ENCODE measurements at regions of chr10 and their contacts with region 1.

Region 1: GRCh38 chr10:110610308-110610774 is 33.8 kb upstream of the RBM20 start:
- DNase-seq: peak; percentile 24
- ATAC-seq: peak; percentile 10; the same call in 2 of the 3 replicates
- H3K4me3 ChIP-seq: no peak overlapping the region
- H3K27ac ChIP-seq: no peak overlapping the region
- H3K4me1 ChIP-seq: peaks cover 31% of the 10 kb centered on the region
- H3K27me3 ChIP-seq: no peaks in the 10 kb centered on the region
- CTCF ChIP-seq: peak; percentile 85 to 92 (median 88)
- EP300 ChIP-seq: no peak
- POLR2A ChIP-seq: no peak
- RAD21 ChIP-seq: peak; percentile 98

Region 2: DNA sequence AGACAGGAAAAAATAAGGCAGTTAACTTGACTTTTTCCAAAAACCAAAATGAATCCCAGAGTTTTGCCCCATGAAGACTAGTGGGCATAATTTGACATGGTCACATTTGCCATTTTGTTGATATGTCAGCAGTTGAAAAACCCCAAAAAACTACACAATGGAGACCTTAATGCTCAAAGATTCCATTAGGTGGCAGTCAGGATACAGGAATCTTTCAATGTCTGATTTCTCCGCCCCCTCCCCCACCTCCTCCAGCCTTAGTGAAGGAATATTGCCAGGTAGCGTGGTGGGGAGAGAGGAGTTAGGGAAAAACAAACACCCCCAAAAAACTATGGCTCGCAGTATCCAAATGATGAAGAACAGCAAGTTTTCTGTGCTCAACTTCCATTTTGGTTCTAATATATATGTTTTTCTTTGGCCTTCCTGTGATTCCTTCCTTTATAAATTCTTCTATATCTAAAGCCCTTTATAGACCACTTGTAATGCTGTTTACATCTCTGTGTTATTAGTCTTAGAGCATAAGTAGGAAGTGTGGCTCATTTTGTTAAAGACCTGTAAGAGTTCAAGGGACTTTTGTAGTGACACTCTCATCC is 298.9 kb before region 1 on chr10:
- CTCF ChIA-PET with region 1: interaction called, 15 read pairs
- POLR2A ChIA-PET with region 1: no interaction called
- RAD21 ChIA-PET with region 1: interaction called, 12 read pairs
- SMC1A ChIA-PET with region 1: interaction called, 10 read pairs
- in situ Hi-C with region 1: no loop called
- intact Hi-C with region 1: no loop called
- DNase-seq: peak; percentile 47
- ATAC-seq: peak; percentile 83
- H3K4me3 ChIP-seq: no peak overlapping the region
- H3K27ac ChIP-seq: no peak overlapping the region
- H3K4me1 ChIP-seq: 0 out of 2 replicates have a peak, but pooled peaks cover 2% of the 10 kb centered on the region
- H3K27me3 ChIP-seq: no peaks in the 10 kb centered on the region
- CTCF ChIP-seq: peak; percentile 62 to 76 (median 68); a peak in 5 of 6 replicates
- EP300 ChIP-seq: no peak
- POLR2A ChIP-seq: no peak
- RAD21 ChIP-seq: peak; percentile 96

Region 3: DNA sequence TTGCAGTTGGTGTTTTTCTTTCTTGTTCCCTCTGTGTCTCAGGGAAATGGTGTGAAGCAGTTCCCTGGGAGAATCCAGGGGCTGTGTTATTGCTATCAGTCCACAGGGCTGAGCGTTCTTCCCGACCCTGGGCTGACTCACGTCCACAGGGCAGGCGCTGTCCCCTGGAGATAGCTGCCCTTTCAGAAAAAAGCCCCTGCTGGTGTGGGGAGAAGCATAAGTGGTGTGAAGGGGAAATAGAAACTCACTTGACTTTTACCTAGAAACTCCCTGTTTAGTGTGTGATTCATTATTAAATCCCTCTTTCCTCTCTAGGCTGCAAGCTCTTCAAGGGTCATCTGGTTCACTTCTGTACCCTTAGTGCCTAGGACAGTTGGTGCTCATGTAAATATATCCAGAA is 242.3 kb before region 1 on chr10:
- CTCF ChIA-PET with region 1: no interaction called
- POLR2A ChIA-PET with region 1: no interaction called
- RAD21 ChIA-PET with region 1: no interaction called
- SMC1A ChIA-PET with region 1: no interaction called
- in situ Hi-C with region 1: no loop called
- intact Hi-C with region 1: no loop called
- DNase-seq: no peak
- ATAC-seq: peak; percentile 86
- H3K4me3 ChIP-seq: no peak overlapping the region
- H3K27ac ChIP-seq: no peak overlapping the region; the same call in 1 of the 2 replicates
- H3K4me1 ChIP-seq: peaks cover 29% of the 10 kb centered on the region
- H3K27me3 ChIP-seq: no peaks in the 10 kb centered on the region
- CTCF ChIP-seq: no peak
- EP300 ChIP-seq: peak in 1 of 2 experiments; percentile 43; a peak in 1 of 4 replicates
- POLR2A ChIP-seq: no peak
- RAD21 ChIP-seq: no peak

Region 4: GRCh38 chr10:110414563-110415309 is 195.6 kb before region 1 on chr10:
- CTCF ChIA-PET with region 1: no interaction called
- POLR2A ChIA-PET with region 1: no interaction called
- RAD21 ChIA-PET with region 1: no interaction called
- SMC1A ChIA-PET with region 1: no interaction called
- in situ Hi-C with region 1: no loop called
- intact Hi-C with region 1: no loop called
- DNase-seq: peak; percentile 99
- ATAC-seq: peak; percentile 83
- H3K4me3 ChIP-seq: no peak overlapping the region
- H3K27ac ChIP-seq: peak overlapping the region; percentile 93
- H3K4me1 ChIP-seq: peaks cover 69% of the 10 kb centered on the region
- H3K27me3 ChIP-seq: no peaks in the 10 kb centered on the region
- CTCF ChIP-seq: no peak
- EP300 ChIP-seq: peak; percentile 97 to 99
- POLR2A ChIP-seq: peak; percentile 49; the same call in 1 of the 2 replicates
- RAD21 ChIP-seq: peak; percentile 38

Region 5: DNA sequence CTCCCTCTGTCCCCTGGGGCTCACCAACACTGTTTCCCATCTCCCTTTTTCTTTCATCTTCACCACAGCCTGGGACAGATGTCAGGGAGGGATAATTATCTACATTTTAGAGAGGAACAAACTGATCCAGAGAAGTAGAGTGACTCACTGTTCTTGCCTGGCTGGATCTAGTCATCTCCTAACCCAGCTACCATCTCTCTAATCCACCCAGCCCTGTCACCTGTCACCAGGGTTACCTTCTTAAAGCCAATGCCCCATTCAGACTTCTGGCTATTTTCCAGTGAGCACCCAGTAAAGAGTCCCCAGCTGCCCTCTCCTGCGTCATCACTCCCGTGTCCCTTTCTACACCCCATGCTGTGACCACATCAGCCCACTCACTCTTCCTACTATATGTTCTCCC is 181.1 kb before region 1 on chr10:
- CTCF ChIA-PET with region 1: no interaction called
- POLR2A ChIA-PET with region 1: no interaction called
- RAD21 ChIA-PET with region 1: no interaction called
- SMC1A ChIA-PET with region 1: no interaction called
- in situ Hi-C with region 1: no loop called
- intact Hi-C with region 1: no loop called
- DNase-seq: no peak
- ATAC-seq: peak; percentile 9
- H3K4me3 ChIP-seq: no peak overlapping the region
- H3K27ac ChIP-seq: no peak overlapping the region
- H3K4me1 ChIP-seq: peaks cover 30% of the 10 kb centered on the region
- H3K27me3 ChIP-seq: no peaks in the 10 kb centered on the region
- CTCF ChIP-seq: no peak
- EP300 ChIP-seq: no peak
- POLR2A ChIP-seq: no peak
- RAD21 ChIP-seq: no peak

Region 6: GRCh38 chr10:110651044-110651958 is 41.0 kb after region 1 on chr10:
- CTCF ChIA-PET with region 1: interaction called, 14 read pairs
- POLR2A ChIA-PET with region 1: interaction called, 3 read pairs
- RAD21 ChIA-PET with region 1: interaction called, 5 read pairs
- SMC1A ChIA-PET with region 1: interaction called, 16 read pairs
- in situ Hi-C with region 1: no loop called
- intact Hi-C with region 1: no loop called
- DNase-seq: no peak
- ATAC-seq: peak; percentile 92
- H3K4me3 ChIP-seq: no peak overlapping the region
- H3K27ac ChIP-seq: no peak overlapping the region
- H3K4me1 ChIP-seq: peaks cover 11% of the 10 kb centered on the region
- H3K27me3 ChIP-seq: no peaks in the 10 kb centered on the region
- CTCF ChIP-seq: no peak
- EP300 ChIP-seq: no peak
- POLR2A ChIP-seq: no peak
- RAD21 ChIP-seq: no peak

Region 7: GRCh38 chr10:110681023-110681681 is 70.8 kb after region 1 on chr10:
- CTCF ChIA-PET with region 1: interaction called, 141 read pairs
- POLR2A ChIA-PET with region 1: interaction called, 4 read pairs
- RAD21 ChIA-PET with region 1: interaction called, 13 read pairs
- SMC1A ChIA-PET with region 1: interaction called, 98 read pairs
- in situ Hi-C with region 1: no loop called
- intact Hi-C with region 1: loop called (anchors 1 kb)
- DNase-seq: no peak
- ATAC-seq: peak; percentile 89
- H3K4me3 ChIP-seq: no peak overlapping the region
- H3K27ac ChIP-seq: no peak overlapping the region
- H3K4me1 ChIP-seq: no peaks in the 10 kb centered on the region
- H3K27me3 ChIP-seq: no peaks in the 10 kb centered on the region
- CTCF ChIP-seq: peak; percentile 49 to 64 (median 55)
- EP300 ChIP-seq: no peak
- POLR2A ChIP-seq: no peak
- RAD21 ChIP-seq: peak; percentile 27; the same call in 1 of the 2 replicates

Region 8: GRCh38 chr10:111018021-111018420 is 407.7 kb after region 1 on chr10:
- CTCF ChIA-PET with region 1: no interaction called
- POLR2A ChIA-PET with region 1: no interaction called
- RAD21 ChIA-PET with region 1: no interaction called
- SMC1A ChIA-PET with region 1: no interaction called
- in situ Hi-C with region 1: no loop called
- intact Hi-C with region 1: loop called (anchors 10 kb)
- DNase-seq: no peak
- ATAC-seq: no peak
- H3K4me3 ChIP-seq: no peak overlapping the region
- H3K27ac ChIP-seq: no peak overlapping the region
- H3K4me1 ChIP-seq: no peaks in the 10 kb centered on the region; the same call in 1 of the 2 replicates
- H3K27me3 ChIP-seq: no peaks in the 10 kb centered on the region
- CTCF ChIP-seq: no peak
- EP300 ChIP-seq: no peak
- POLR2A ChIP-seq: no peak
- RAD21 ChIP-seq: no peak

Region 9: DNA sequence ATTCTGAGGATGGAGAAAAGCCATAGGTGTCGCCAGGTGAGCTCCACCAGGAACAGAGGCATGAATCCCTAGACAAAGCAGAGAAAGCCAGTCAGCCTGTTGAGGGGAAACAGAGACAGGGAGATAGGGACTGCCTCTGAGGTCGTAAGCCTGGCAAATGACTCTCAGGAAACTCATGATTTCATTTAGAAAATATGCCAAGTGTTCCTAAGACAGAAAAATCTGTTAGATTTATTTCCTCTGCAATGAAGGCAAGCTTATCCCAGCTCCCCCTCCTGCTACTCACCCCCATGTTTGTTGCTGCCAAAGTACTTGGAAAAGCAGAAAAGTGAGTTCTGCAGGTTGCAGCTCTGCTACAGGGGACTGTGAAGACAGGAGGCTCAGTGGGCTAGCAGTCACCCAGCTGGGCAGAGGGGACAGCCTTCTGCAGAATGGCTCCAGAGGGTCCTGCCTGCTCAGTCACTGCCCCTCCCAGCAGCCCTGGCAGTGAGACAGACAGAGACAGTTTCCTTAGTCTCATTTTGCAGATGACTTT is 650.8 kb after region 1 on chr10:
- CTCF ChIA-PET with region 1: no interaction called
- POLR2A ChIA-PET with region 1: no interaction called
- RAD21 ChIA-PET with region 1: no interaction called
- SMC1A ChIA-PET with region 1: no interaction called
- in situ Hi-C with region 1: no loop called
- intact Hi-C with region 1: no loop called
- DNase-seq: no peak
- ATAC-seq: no peak
- H3K4me3 ChIP-seq: no peak overlapping the region
- H3K27ac ChIP-seq: no peak overlapping the region
- H3K4me1 ChIP-seq: no peaks in the 10 kb centered on the region
- H3K27me3 ChIP-seq: no peaks in the 10 kb centered on the region
- CTCF ChIP-seq: no peak
- EP300 ChIP-seq: no peak
- POLR2A ChIP-seq: no peak
- RAD21 ChIP-seq: no peak